ENCODE measurements at regions of chr19 and their contacts with region 1.

Region 1: DNA sequence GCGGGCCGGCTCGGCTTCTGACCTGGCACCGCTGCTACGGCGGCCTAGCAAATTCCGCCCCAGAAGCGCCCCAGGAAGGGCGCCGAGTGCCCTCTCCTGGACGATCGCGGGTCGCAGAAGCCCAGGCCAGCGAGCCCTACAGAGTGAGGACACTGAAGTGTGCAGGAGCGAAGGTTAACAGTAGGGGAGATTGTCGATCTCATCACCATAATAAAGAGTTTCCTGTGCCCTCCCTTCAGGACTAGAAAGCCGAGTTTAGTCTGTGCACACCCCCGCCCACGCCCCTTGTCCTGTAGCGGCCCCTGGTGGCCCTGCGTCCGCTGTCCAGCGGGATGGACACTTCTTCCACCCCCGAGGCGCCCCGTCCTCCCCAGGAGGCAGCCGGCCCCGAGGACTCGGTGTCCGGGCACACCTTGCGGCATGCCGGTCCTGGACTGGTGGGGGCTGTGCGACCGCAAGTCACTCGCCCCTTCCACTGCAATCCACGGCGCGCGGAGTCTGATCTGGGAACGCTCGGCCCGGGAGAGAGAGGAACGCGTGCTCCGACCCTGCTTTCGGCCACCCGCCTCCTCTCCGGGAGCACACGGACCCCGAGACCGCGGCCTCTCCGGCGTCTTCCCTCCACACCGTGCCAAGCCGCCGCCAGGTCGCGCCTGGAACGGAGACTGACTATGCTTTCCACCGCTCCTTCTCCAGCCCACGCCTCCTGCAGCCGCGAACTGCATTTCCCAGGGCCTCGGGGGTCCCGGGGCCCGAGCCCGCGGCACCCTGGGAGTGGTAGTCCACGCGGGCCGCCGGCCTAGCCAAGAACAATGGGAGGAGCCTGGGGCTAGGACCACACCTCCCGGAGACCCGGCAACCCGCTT is 769 bp upstream of the KMT2B start:
- DNase-seq: peak; percentile 90 to 93
- ATAC-seq: peak; percentile 91 to 93 (median 92)
- H3K4me3 ChIP-seq: peak overlapping the region; percentile 90
- H3K27ac ChIP-seq: peak overlapping the region; percentile 94
- H3K4me1 ChIP-seq: peaks cover 23% of the 10 kb centered on the region
- H3K27me3 ChIP-seq: no peaks in the 10 kb centered on the region
- CTCF ChIP-seq: peak; percentile 90

Region 2: DNA sequence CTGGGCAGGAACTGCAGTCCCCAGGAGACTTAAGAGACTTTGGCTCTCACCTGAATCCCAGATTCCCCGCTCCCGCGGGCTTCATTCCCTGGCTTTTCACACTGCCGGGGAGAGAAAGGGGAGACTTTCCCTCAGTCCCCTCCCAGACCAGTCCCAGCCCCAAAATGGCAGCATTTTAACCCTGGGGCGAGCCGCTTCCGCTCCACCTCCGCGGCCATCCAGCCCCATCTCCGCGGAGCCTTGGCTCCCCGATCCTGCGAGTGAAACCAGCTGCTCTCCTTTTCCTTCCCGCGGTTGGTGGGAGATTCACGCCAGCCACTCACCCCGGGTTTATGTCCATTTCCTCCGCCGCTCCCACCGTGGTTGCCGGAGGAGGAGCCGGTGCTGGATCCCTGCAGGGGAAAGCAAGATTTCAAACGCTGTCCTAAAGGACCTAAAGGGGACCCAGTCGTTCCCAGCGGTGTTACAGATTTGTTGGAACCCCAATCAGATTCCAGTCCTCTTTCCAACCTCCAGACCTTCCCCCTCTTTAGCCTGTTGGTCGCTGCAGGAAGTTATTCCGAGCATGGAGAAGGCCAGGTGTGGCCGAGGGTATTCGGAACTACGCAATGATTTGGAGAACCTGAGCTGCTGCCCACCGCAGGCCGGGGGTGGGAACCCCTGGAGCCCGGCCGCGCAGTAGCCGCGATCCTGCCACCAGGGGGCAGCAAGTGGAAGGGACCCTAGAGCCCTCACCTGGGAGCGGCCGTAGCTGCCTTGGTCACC is 207.0 kb before region 1 on chr19:
- intact Hi-C with region 1: no loop called
- DNase-seq: peak; percentile 67 to 76
- ATAC-seq: peak; percentile 63 to 86 (median 78)
- H3K4me3 ChIP-seq: peak overlapping the region; percentile 47
- H3K27ac ChIP-seq: no peak overlapping the region
- H3K4me1 ChIP-seq: peaks cover 4% of the 10 kb centered on the region
- H3K27me3 ChIP-seq: peaks cover 0 to 94% (median 35%) of the 10 kb centered on the region in 3 donors
- CTCF ChIP-seq: peak; percentile 80

Region 3: DNA sequence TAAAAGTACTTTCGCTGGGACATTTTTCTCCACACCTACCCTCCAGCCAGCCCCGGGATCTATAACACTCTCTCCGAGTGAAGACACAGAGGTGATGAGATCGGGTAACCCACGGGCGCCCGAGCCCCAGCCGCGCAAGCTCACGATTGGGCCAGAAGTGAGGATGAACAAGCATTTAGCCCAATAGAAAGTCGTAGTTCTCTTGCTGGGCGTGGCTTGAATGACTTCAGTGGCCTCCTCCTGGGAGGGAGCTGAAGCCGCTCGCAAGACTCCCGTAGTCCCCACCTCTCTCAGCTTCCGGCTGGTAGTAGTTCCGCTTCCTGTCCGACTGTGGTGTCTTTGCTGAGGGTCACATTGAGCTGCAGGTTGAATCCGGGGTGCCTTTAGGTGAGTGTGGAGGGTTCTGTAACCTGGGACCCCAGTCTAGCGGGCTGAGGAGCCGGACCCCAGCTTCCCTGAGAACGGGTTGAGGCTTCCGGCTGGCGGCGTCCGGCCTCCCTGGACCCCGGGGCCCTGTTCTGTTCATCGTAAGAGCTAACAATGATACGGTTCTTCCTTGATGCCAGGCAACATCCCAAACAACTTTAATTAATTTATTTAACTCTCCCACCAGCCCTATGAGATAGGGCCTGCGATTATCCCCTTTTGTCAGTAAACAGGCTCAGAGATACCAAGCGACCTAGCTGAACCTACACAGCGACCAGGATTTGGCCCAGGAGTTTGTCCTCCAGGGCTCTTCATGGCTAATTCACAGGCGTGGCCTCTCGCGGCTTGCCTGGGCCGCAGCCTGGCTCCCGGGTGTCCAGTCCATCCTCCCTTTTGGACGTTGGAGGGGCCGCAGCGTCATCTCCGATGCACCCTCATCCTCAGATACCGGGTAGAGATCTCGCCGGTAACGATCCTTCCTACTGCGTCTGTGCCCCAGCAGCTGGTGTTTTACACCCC is 68.7 kb before region 1 on chr19 and contains the start of gene COX6B1:
- intact Hi-C with region 1: loop called in 1 of 2 experiments (anchors 5 kb)
- DNase-seq: peak; percentile 92 to 95
- ATAC-seq: peak; percentile 84 to 91 (median 90)
- H3K4me3 ChIP-seq: peak within 1 kb of the TSS; percentile 97
- H3K27ac ChIP-seq: peak within 1 kb of the TSS; percentile 91
- H3K4me1 ChIP-seq: peaks cover 20% of the 10 kb centered on the region
- H3K27me3 ChIP-seq: no peaks in the 10 kb centered on the region
- CTCF ChIP-seq: no peak
- total RNA-seq, gene COX6B1: 631 to 878 (median 757) TPM

Region 4: GRCh38 chr19:35693830-35694599 is 23.0 kb before region 1 on chr19:
- intact Hi-C with region 1: loop called (anchors 1 to 2 kb)
- DNase-seq: peak; percentile 81 to 92
- ATAC-seq: peak; percentile 99 to 100 (median 100)
- H3K4me3 ChIP-seq: no peak overlapping the region
- H3K27ac ChIP-seq: no peak overlapping the region
- H3K4me1 ChIP-seq: no peaks in the 10 kb centered on the region
- H3K27me3 ChIP-seq: peaks cover 0 to under 1% (median 0%) of the 10 kb centered on the region in 3 donors
- CTCF ChIP-seq: peak; percentile 96